ENCODE measurements at regions of chr15 and their contacts with region 1.

Region 1: GRCh38 chr15:85485956-85486567 is 105.7 kb downstream of the AKAP13 start:
- DNase-seq: peak; percentile 78
- H3K4me3 Mint-ChIP-seq: no peak overlapping the region
- H3K27ac Mint-ChIP-seq: no peak overlapping the region
- H3K4me1 Mint-ChIP-seq: peaks cover 53% of the 10 kb centered on the region
- H3K27me3 Mint-ChIP-seq: no peaks in the 10 kb centered on the region
- CTCF ChIP-seq: peak; percentile 77

Region 2: GRCh38 chr15:85504749-85505676 is 19.0 kb after region 1 on chr15:
- CTCF ChIA-PET with region 1: interaction called, 9 read pairs
- intact Hi-C with region 1: loop called (anchors 1 kb)
- DNase-seq: peak; percentile 63
- H3K4me3 Mint-ChIP-seq: no peak overlapping the region
- H3K27ac Mint-ChIP-seq: peak overlapping the region; percentile 26
- H3K4me1 Mint-ChIP-seq: peaks cover 32% of the 10 kb centered on the region
- H3K27me3 Mint-ChIP-seq: no peaks in the 10 kb centered on the region
- CTCF ChIP-seq: no peak

Region 3: DNA sequence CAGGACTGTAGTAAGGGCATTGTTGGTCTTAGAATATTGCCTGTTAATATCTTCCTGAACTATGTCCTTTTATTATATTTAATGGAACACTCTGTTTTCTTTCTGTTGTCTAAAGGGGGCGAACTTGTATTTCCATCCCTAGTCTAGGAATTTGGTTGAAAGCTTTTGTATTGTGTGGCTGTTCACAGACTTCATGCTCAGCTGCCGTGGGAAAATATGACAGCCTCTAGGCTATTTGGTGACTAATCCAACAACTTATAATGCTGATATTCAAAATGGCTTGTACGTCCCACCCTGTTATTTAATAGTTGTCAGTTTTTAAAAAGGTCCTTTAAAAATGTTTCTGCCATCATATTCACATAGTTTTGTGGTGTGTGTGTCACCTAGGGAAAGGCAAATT is 106.1 kb after region 1 on chr15:
- CTCF ChIA-PET with region 1: interaction called, 4 read pairs
- intact Hi-C with region 1: loop called (anchors 1 kb)
- DNase-seq: peak; percentile 41
- H3K4me3 Mint-ChIP-seq: no peak overlapping the region
- H3K27ac Mint-ChIP-seq: peak overlapping the region; percentile 47
- H3K4me1 Mint-ChIP-seq: peaks cover 61% of the 10 kb centered on the region
- H3K27me3 Mint-ChIP-seq: no peaks in the 10 kb centered on the region
- CTCF ChIP-seq: no peak

Region 4: DNA sequence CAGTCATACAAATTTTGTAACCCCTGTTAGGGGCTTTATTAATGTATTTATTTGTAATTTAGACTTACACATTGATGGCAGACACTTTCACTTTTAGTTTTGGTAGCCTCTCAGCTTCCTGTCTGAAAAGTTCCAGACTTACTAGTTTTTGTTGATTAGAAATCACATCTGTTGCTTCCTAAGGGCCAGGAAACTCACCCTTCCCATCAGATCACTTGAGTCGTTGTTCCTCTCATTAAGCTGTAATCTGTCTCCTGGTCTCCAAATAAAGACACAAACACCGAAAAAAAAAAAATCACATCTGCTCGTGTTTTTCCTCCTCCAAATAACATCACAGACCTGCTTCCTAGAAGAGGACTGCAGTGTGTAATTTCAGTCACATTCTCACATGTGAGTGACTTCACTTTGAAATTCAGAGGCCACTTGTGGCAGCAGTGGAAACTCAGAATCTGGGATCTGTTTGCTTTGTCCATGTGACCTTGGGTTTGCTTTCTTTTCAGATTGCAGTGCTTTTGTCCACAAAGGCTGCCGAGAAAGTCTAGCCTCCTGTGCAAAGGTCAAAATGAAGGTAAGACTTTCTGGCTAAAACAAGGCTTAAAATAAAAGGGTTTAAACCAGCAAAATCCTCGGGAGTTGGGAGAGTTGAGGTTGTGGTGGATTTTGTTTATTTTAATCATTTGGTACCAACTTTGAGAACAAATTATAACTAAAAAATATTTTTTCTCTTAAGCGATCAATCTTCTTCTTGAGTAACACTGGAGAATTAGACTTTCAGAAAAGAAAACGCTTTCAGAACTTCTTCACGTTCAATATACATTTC is 221.7 kb after region 1 on chr15:
- CTCF ChIA-PET with region 1: no interaction called
- intact Hi-C with region 1: loop called (anchors 10 kb)
- DNase-seq: no peak
- H3K4me3 Mint-ChIP-seq: peak overlapping the region; percentile 27
- H3K27ac Mint-ChIP-seq: peak overlapping the region; percentile 66
- H3K4me1 Mint-ChIP-seq: peaks cover 27% of the 10 kb centered on the region
- H3K27me3 Mint-ChIP-seq: no peaks in the 10 kb centered on the region
- CTCF ChIP-seq: no peak

Region 5: DNA sequence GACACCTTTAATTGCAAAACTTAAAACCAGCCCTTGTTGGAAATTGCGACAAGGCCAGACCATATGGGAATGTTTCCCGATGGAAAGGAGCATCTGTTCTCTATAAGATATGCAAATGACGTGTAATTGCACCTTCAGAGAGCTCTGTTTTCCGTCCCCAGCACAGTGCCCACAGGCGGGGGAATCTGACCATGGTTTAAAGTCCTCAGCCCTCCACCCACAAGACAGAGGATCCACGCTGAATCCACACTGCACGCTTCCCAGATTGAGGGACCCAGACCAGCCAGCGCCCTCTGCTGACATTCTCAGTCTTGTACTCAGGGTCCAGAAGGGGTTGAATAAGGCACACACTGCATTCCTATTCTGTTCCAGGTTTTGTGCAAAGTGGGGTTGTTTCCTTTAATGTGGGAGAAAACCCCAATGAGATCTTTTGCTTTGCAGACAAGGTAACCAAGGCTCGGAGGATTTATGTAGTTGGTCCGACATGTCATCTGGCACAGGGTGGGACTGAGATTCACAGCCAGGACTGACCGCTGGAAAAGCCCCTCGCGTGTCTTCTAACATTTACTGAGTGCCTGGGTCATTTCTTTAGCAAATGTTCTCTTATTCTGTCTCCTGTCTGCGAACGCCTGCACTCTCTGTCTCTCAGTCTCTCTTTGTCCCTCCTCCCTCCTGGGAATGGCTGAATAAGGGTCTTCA is 345.5 kb after region 1 on chr15:
- CTCF ChIA-PET with region 1: interaction called, 3 read pairs
- intact Hi-C with region 1: loop called (anchors 10 kb)
- DNase-seq: peak; percentile 68
- H3K4me3 Mint-ChIP-seq: no peak overlapping the region
- H3K27ac Mint-ChIP-seq: no peak overlapping the region
- H3K4me1 Mint-ChIP-seq: no peaks in the 10 kb centered on the region
- H3K27me3 Mint-ChIP-seq: no peaks in the 10 kb centered on the region
- CTCF ChIP-seq: peak; percentile 69